Activated CD8-positive, alpha-beta T cell treated with anti-CD3 and anti-CD28 coated beads, Interleukin-2, amount 10 ng/mL, durations not matched to agents 7 days and 5 days (primary cell): ENCODE measurements at regions of chr3 and their contacts with region 1.

Region 1: GRCh38 chr3:152205097-152205593 is 63.6 kb upstream of the MBNL1 start:
- DNase-seq: no peak
- ATAC-seq: peak; percentile 48
- H3K4me3 Mint-ChIP-seq: peak overlapping the region; percentile 75
- H3K27ac Mint-ChIP-seq: peak overlapping the region; percentile 85
- H3K4me1 Mint-ChIP-seq: peaks cover 69% of the 10 kb centered on the region
- H3K27me3 Mint-ChIP-seq: no peaks in the 10 kb centered on the region

Region 2: GRCh38 chr3:152222327-152222726 is 17.2 kb after region 1 on chr3:
- CTCF ChIA-PET with region 1: interaction called, 11 read pairs
- POLR2A ChIA-PET with region 1: interaction called, 9 read pairs
- DNase-seq: no peak
- ATAC-seq: no peak
- H3K4me3 Mint-ChIP-seq: peak overlapping the region; percentile 51
- H3K27ac Mint-ChIP-seq: peak overlapping the region; percentile 62
- H3K4me1 Mint-ChIP-seq: peaks cover 64% of the 10 kb centered on the region
- H3K27me3 Mint-ChIP-seq: no peaks in the 10 kb centered on the region

Region 3: DNA sequence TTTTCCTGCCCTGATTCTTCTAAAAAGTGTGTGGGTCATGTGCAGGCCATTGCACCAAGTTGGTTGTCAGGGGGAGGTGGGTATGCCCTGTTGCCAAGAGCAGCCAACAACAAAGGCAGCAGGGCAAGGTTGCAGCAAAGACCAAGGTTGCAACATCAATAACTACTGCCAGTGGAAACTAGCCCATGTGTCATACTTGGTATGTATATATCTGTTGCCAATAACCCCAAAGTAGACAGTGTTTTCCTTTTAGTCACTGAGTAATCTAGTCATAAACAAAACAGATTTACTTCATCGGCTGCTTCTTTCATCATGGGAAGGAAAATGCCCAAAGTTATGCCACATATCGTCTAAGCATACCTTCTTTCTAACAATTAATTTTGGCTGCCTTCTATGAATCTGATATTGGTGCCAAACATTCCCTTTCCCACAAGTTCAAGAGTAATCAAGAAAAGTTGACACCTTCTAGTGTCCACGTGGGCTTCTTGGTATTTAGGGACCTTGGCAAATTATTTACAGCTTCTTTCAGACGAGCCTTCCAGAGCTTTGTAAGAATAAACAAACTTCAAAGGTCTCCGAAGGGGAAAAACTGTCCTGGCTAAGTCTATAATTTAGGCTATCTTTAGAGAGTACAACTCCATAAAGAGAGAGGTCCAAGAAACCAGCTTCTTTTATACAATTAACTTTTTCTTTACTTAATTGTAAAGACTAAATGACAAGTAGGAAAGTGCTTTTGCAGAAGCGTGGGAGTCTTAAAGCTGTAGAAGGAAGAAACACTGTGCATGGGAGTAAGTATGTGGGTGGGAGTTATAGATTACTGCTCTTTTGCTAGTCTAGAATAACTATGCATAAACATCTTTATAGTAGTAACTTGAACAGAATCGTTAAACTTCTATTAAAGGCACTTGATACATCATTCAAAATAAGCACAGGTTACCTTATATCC is 53.6 kb after region 1 on chr3:
- CTCF ChIA-PET with region 1: interaction called, 7 read pairs
- POLR2A ChIA-PET with region 1: interaction called, 15 read pairs
- DNase-seq: peak; percentile 76
- ATAC-seq: peak; percentile 74
- H3K4me3 Mint-ChIP-seq: peak overlapping the region; percentile 71
- H3K27ac Mint-ChIP-seq: peak overlapping the region; percentile 93
- H3K4me1 Mint-ChIP-seq: peaks cover 81% of the 10 kb centered on the region
- H3K27me3 Mint-ChIP-seq: no peaks in the 10 kb centered on the region